Activated naive CD4-positive, alpha-beta T cell treated with anti-CD3 and anti-CD28 coated beads for 36 hours (primary cell): ENCODE measurements at regions of chr3 and their contacts with region 1.

Region 1: GRCh38 chr3:33833408-33834095 is 35.1 kb downstream of the PDCD6IP start:
- DNase-seq: no peak
- H3K4me3 Mint-ChIP-seq: no peak overlapping the region
- H3K27ac Mint-ChIP-seq: peak overlapping the region; percentile 76
- H3K4me1 Mint-ChIP-seq: peaks cover 31% of the 10 kb centered on the region
- H3K27me3 Mint-ChIP-seq: no peaks in the 10 kb centered on the region

Region 2: DNA sequence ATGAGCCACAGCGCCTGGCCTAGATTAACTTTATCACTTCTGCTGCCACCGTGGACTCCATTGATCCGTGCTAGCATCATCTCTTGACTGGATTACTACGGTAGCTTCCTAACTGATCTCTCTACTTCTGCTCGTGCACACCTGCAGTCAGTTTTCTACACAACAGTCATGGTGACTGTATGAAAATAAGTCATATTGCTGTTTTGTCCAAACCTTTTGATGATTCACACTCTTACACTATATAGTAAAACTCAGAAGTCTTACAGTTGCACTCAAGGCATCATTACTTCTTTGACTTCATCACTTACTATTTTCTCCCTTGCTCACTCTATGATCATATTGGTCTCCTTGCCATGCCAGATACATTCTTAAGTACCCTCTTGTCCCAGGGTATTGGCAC is 25.0 kb before region 1 on chr3:
- CTCF ChIA-PET with region 1: no interaction called
- intact Hi-C with region 1: loop called (anchors 2 kb)
- DNase-seq: peak; percentile 36
- H3K4me3 Mint-ChIP-seq: no peak overlapping the region
- H3K27ac Mint-ChIP-seq: no peak overlapping the region
- H3K4me1 Mint-ChIP-seq: peaks cover 66% of the 10 kb centered on the region
- H3K27me3 Mint-ChIP-seq: no peaks in the 10 kb centered on the region